ENCODE measurements at regions of chr7 and their contacts with region 1.

Region 1: DNA sequence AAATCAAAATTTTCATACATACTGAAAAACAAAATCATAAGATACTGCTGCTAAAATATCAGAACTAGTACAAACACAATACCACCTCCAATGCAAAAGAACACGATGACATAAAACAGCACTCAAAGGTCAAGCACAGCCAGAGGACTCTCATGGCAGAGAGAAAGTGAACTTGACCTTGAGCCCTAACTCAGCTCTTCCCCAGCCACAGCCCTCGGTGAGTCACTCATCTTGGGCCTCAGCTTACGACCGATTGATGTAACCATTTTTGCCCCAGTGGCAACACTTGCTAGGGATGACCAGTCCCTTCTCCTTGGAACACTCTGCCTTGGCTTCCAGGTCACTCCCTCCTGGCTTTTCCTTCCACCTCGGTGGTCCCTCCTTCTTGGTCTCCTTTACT is 77.8 kb downstream of the JAZF1 start:
- DNase-seq: peak; percentile 49 to 81
- ATAC-seq: peak; percentile 44 to 83
- H3K4me3 ChIP-seq: no peak overlapping the region
- H3K27ac ChIP-seq: peak overlapping the region; percentile 8 to 89 (median 33)
- H3K4me1 ChIP-seq: peaks cover 42 to 44% of the 10 kb centered on the region in 2 donors
- H3K27me3 ChIP-seq: no peaks in the 10 kb centered on the region
- CTCF ChIP-seq: no peak
- POLR2A ChIP-seq: peak; percentile 16 to 18

Region 2: GRCh38 chr7:27662490-27663205 is 440.1 kb before region 1 on chr7 and contains the start of gene HIBADH:
- in situ Hi-C with region 1: no loop called
- intact Hi-C with region 1: loop called (anchors 5 kb)
- DNase-seq: peak; percentile 99 to 100
- ATAC-seq: peak; percentile 96 to 98
- H3K4me3 ChIP-seq: peak within 1 kb of the TSS; percentile 73 to 99 (median 92)
- H3K27ac ChIP-seq: peak within 1 kb of the TSS; percentile 95 to 100 (median 97)
- H3K4me1 ChIP-seq: peaks cover 10 to 14% of the 10 kb centered on the region in 2 donors
- H3K27me3 ChIP-seq: no peaks in the 10 kb centered on the region
- CTCF ChIP-seq: peak; percentile 12 to 46 (median 29)
- POLR2A ChIP-seq: peak; percentile 96 to 99
- total RNA-seq, gene HIBADH: 42.2 to 56.4 (median 49.0) TPM

Region 3: GRCh38 chr7:28005075-28005846 is 97.5 kb before region 1 on chr7:
- in situ Hi-C with region 1: no loop called
- intact Hi-C with region 1: loop called (anchors 5 kb)
- DNase-seq: peak; percentile 81 to 86
- ATAC-seq: peak; percentile 94 to 97
- H3K4me3 ChIP-seq: peak overlapping the region in 1 of 4 donors; percentile 8
- H3K27ac ChIP-seq: peak overlapping the region; percentile 82 to 88 (median 84)
- H3K4me1 ChIP-seq: peaks cover 11 to 21% of the 10 kb centered on the region in 2 donors
- H3K27me3 ChIP-seq: no peaks in the 10 kb centered on the region
- CTCF ChIP-seq: no peak
- POLR2A ChIP-seq: no peak

Region 4: GRCh38 chr7:28408960-28409715 is 306.4 kb after region 1 on chr7:
- in situ Hi-C with region 1: no loop called
- intact Hi-C with region 1: loop called (anchors 1 kb)
- DNase-seq: peak; percentile 94 to 98
- ATAC-seq: peak; percentile 72 to 80
- H3K4me3 ChIP-seq: peak overlapping the region; percentile 61 to 92 (median 72)
- H3K27ac ChIP-seq: peak overlapping the region; percentile 91 to 98 (median 94)
- H3K4me1 ChIP-seq: peaks cover 9 to 21% of the 10 kb centered on the region in 2 donors
- H3K27me3 ChIP-seq: no peaks in the 10 kb centered on the region
- CTCF ChIP-seq: no peak
- POLR2A ChIP-seq: peak; percentile 90 to 91

Region 5: GRCh38 chr7:28685644-28686417 is 583.1 kb after region 1 on chr7:
- in situ Hi-C with region 1: no loop called
- intact Hi-C with region 1: loop called (anchors 10 kb)
- DNase-seq: peak; percentile 93 to 94
- ATAC-seq: peak; percentile 97
- H3K4me3 ChIP-seq: peak overlapping the region; percentile 49 to 68 (median 56)
- H3K27ac ChIP-seq: peak overlapping the region; percentile 76 to 87 (median 80)
- H3K4me1 ChIP-seq: peaks cover 33 to 43% of the 10 kb centered on the region in 2 donors
- H3K27me3 ChIP-seq: no peaks in the 10 kb centered on the region
- CTCF ChIP-seq: no peak
- POLR2A ChIP-seq: peak; percentile 65 to 80

Region 6: DNA sequence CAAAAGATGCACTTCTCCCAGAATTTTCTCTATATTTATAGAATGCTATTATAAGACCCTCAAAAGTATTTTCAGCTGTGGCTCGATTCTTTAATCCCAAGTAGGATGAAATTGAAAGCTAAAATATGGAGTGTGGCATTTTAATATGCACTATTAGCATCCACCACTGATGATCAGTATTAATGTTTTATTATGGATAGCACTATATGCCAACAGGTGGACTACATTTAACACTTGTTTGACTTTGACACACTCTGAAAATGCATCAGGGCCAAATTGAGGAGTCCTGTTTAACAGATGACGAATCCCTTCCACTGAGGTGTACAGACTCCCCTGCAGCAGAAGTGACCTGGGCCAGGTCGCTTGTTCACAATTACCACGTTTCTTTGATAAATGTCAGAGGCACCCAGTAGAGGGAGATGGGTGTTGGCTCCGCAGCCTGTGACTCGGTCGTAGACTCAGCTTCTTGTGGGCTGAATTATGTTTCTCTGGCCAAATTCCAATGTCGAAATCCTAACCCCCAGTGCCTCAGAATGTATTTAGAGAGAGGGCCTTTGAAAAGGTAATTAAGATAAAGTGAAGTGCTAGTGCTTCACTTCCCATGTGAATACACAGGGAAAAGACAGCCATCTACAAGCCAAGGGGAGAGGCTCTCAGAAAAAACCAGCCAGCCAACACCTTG is 1751.6 kb after region 1 on chr7:
- in situ Hi-C with region 1: no loop called
- intact Hi-C with region 1: loop called (anchors 10 kb)
- DNase-seq: peak in 1 of 2 donors; percentile 27
- ATAC-seq: no peak
- H3K4me3 ChIP-seq: no peak overlapping the region
- H3K27ac ChIP-seq: peak overlapping the region; percentile 82 to 96 (median 92)
- H3K4me1 ChIP-seq: peaks cover 54 to 73% of the 10 kb centered on the region in 2 donors
- H3K27me3 ChIP-seq: no peaks in the 10 kb centered on the region
- CTCF ChIP-seq: peak in 2 of 5 experiments; percentile 19 to 32
- POLR2A ChIP-seq: no peak

Measured in gastrocnemius medialis (tissue), 4 donors.